B cell (primary cell): ENCODE measurements at regions of chr22 and their contacts with region 1.

Region 1: DNA sequence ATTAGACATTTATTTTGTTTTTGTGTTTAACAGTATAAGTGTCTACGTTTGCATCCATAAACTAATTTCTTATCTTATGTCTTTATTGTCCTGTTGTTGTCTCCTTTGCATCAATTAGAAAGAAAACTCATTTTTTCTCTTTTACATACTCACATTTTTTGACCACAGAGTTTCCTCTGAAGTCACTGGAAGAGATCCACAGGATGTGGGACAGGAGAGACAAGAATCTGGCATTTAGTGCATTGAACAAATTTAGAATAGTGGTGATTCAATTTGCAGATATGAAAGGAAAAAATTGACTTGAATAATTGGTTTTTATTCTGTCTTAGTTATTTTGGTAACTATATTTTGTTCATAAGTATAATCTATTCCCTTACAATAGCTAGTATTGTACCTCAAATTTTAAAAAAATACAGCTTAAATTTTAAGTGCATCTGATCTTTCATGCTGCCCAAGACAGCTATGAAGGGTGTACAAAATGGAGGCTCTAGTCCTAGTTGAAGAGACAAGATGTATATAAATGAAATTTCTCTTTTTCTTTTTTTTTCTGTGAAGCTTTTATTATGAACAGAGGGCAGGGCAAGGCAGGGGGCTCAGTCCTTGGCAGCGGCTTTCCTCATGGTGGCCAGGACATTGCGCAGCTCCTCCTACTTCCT is 24.4 kb downstream of the HORMAD2 start:
- DNase-seq: no peak
- ATAC-seq: no peak
- H3K4me3 ChIP-seq: no peak overlapping the region
- H3K4me3 Mint-ChIP-seq: no peak overlapping the region
- H3K27ac ChIP-seq: no peak overlapping the region
- H3K27ac Mint-ChIP-seq: no peak overlapping the region
- H3K4me1 ChIP-seq: no peaks in the 10 kb centered on the region
- H3K4me1 Mint-ChIP-seq: peaks cover 5% of the 10 kb centered on the region
- H3K27me3 ChIP-seq: no peaks in the 10 kb centered on the region
- H3K27me3 Mint-ChIP-seq: peaks cover 12% of the 10 kb centered on the region
- CTCF ChIP-seq: no peak

Region 2: GRCh38 chr22:30121960-30122359 is 17.3 kb after region 1 on chr22:
- CTCF ChIA-PET with region 1: interaction called, 20 read pairs
- POLR2A ChIA-PET with region 1: no interaction called
- intact Hi-C with region 1: no loop called
- DNase-seq: no peak
- ATAC-seq: no peak
- H3K4me3 ChIP-seq: no peak overlapping the region
- H3K4me3 Mint-ChIP-seq: no peak overlapping the region
- H3K27ac ChIP-seq: no peak overlapping the region
- H3K27ac Mint-ChIP-seq: no peak overlapping the region
- H3K4me1 ChIP-seq: no peaks in the 10 kb centered on the region
- H3K4me1 Mint-ChIP-seq: no peaks in the 10 kb centered on the region
- H3K27me3 ChIP-seq: no peaks in the 10 kb centered on the region
- H3K27me3 Mint-ChIP-seq: peaks cover 8% of the 10 kb centered on the region
- CTCF ChIP-seq: no peak

Region 3: DNA sequence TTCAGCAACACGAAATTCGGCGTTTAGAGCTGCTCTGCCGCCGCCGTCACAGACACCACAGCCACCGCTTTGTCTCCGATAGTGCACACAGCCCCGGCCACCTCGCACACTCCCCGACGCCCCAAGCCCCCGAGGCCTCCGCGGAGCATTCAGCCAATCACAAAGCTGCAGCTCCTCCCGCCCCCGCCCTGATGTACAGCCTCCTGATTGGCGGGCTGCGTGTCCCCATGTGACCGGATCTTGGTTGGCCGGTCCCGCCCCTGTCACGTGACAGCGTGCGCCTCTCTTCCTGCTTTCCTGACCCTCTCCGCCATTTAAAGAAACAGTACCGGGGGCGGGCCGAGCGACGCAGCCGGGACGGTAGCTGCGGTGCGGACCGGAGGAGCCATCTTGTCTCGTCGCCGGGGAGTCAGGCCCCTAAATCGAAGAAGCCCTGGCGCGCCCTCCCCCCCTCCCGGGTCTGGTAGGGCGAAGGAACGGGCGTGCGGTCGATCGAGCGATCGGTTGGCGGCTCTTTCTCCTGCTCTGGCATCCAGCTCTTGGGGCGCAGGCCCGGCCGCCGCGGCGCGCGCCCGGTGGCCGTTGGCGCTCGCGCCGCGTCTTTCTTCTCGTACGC is 864.4 kb after region 1 on chr22 and contains the start of gene TUG1:
- CTCF ChIA-PET with region 1: no interaction called
- POLR2A ChIA-PET with region 1: no interaction called
- intact Hi-C with region 1: no loop called
- DNase-seq: peak; percentile 99
- ATAC-seq: peak; percentile 91
- H3K4me3 ChIP-seq: peak within 1 kb of the TSS; percentile 74 to 88 (median 82)
- H3K4me3 Mint-ChIP-seq: peak within 1 kb of the TSS; percentile 98
- H3K27ac ChIP-seq: peak within 1 kb of the TSS; percentile 90 to 94
- H3K27ac Mint-ChIP-seq: peak within 1 kb of the TSS; percentile 99
- H3K4me1 ChIP-seq: peaks cover 19 to 20% of the 10 kb centered on the region in 2 donors
- H3K4me1 Mint-ChIP-seq: peaks cover 60% of the 10 kb centered on the region
- H3K27me3 ChIP-seq: no peaks in the 10 kb centered on the region
- H3K27me3 Mint-ChIP-seq: no peaks in the 10 kb centered on the region
- CTCF ChIP-seq: no peak
- total RNA-seq, gene TUG1: 110 and 119 TPM in 2 replicates